GM23248 (cell line): ENCODE measurements at regions of chr21 and their contacts with region 1.

Region 1: DNA sequence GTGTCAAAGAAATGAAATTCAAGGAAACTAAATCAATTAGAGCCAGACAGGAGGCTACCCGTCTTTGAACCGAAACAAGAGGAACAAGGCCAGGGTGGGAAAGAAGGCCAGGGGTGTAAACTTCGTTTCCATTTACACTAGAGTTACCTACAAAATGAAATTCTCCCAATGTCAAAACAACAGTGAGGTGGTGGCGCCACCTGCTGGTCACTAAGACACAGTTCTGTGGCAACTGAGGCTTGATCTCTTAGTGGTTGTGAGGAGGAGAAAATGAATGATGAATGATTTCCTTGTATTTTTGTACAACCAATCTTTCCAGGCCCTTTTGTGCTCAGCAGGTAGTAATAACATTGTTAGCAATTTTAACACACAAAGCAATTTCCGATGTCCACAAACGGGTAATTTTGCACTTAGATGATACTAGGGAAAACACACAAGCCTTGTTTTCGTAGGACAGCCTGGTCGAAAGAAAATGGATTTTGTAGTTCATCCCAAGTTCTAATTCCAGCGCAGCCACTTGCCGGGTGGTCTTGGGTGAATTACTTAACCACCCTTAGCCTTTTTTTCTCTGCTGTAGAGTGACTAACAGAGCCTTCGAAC is 54.8 kb upstream of the SOD1 start:
- DNase-seq: peak; percentile 79
- H3K4me3 ChIP-seq: no peak overlapping the region
- H3K27ac ChIP-seq: no peak overlapping the region
- H3K4me1 ChIP-seq: no peaks in the 10 kb centered on the region
- H3K27me3 ChIP-seq: no peaks in the 10 kb centered on the region

Region 2: DNA sequence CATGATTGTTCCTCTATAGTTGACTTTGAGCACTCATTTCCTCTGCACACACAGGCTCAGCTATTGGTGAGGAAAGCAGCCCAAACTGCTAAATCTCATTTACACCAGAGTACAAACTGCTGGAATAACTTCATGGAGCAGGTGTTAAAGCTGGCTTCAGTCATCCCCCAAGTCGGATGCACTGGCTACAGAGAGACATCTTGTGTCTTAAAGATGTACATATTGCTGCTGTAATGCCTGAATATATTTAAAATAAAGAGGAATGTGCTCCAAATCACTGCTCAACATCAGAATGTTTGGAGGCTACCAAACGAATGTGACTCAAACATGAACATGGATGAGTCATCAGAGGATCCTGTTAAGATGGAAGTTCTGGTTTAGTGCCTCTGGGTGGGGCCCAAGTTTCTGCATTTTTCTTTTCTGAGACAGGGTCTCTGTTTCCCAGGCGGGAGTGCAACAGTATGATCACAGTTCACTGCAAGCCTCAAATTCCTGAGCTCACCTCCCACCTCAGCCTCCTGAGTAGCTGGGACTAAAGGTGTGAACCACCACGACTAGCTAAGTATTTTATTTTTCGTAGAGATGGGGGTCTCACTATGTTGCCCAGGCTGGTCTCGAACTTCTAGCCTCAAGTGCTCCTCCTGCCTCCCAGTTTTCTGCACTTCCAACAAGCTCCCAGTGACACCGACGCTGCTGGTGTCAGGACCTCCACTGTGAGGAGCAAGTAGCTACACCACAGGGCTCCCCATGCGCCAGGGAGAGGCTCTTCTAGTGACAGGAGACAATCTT is 487.4 kb before region 1 on chr21:
- in situ Hi-C with region 1: loop called (anchors 10 kb)
- DNase-seq: peak; percentile 95
- H3K4me3 ChIP-seq: no peak overlapping the region
- H3K27ac ChIP-seq: peak overlapping the region; percentile 38; the same call in 1 of the 2 replicates
- H3K4me1 ChIP-seq: peaks cover 12% of the 10 kb centered on the region
- H3K27me3 ChIP-seq: no peaks in the 10 kb centered on the region